Thyroid gland (tissue), 4 donors: ENCODE measurements at regions of chr15 and their contacts with region 1.

Region 1: DNA sequence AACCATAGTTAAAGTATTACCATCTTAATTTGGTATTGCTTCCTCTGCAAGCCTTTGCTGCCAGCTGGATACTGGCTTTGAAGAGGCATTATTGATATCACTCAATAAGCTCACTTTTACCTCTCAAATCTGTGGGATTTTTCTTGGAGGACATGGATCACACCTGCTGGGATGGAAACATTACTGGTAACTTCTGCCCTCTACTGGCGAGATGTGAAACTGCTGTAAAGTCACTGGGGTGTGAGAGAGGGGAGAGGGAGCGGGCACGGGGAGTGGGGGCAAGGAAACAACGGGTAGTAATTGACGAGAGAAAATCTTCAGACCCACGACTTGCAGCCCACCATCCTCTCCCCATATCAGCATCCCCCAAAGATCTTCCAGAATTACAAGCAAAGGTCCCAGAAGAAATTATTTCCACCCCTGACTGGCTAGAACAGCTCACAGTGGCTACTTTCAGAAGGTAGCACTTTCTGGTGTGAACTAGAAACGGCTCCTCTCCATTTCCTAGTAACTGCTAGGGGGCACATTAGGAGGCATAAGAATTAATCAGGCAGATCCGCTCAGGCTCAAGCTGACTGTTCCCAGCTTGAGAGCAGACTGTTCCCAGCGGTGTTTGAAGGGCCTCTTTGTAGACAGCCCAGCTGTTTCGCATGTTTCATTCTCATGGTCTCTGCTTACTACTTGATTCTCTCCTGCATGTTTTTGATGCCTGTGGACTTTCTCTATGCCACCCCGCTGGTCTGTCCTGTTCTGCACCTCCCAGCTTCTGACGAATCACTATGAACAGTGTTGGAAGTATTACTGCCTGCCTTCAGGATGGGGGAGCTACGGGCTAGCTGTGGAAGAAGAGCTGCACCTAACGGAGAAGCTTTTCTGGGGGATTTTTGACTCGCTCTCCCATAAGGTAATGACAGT is 230.4 kb upstream of the CHRM5 start:
- DNase-seq: peak; percentile 21 to 22
- H3K4me3 ChIP-seq: no peak overlapping the region
- H3K27ac ChIP-seq: no peak overlapping the region
- H3K4me1 ChIP-seq: no peaks in the 10 kb centered on the region
- H3K27me3 ChIP-seq: no peaks in the 10 kb centered on the region
- CTCF ChIP-seq: peak; percentile 33 to 83 (median 62)
- POLR2A ChIP-seq: no peak

Region 2: DNA sequence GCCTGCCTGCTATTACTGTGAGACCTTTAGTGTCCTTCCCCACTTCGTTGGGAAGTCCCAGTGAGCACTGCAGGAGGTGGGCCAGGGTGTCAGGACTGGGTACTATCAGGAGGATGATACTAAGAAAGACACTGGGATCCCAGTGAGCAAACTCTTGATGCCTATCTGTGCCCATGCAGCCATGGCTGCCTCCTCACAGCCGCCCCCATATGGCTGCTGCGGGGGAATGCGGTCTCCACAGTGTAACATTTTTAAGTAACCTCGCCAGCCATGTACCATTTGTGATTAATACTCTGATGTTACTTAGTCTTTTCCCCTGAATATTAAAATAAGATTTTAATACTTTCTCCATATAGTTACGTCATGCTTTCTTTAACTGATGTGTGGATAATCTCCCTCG is 114.9 kb before region 1 on chr15:
- intact Hi-C with region 1: no loop called
- DNase-seq: no peak
- H3K4me3 ChIP-seq: no peak overlapping the region
- H3K27ac ChIP-seq: no peak overlapping the region
- H3K4me1 ChIP-seq: no peaks in the 10 kb centered on the region
- H3K27me3 ChIP-seq: no peaks in the 10 kb centered on the region
- CTCF ChIP-seq: no peak
- POLR2A ChIP-seq: no peak

Region 3: GRCh38 chr15:33801954-33802353 is 64.0 kb after region 1 on chr15:
- intact Hi-C with region 1: no loop called
- DNase-seq: no peak
- H3K4me3 ChIP-seq: no peak overlapping the region
- H3K27ac ChIP-seq: peak overlapping the region in 1 of 3 donors; percentile 26
- H3K4me1 ChIP-seq: no peaks in the 10 kb centered on the region
- H3K27me3 ChIP-seq: no peaks in the 10 kb centered on the region
- CTCF ChIP-seq: no peak
- POLR2A ChIP-seq: no peak

Region 4: GRCh38 chr15:33963831-33964664 is 226.1 kb after region 1 on chr15:
- intact Hi-C with region 1: loop called (anchors 10 kb)
- DNase-seq: no peak
- H3K4me3 ChIP-seq: no peak overlapping the region
- H3K27ac ChIP-seq: no peak overlapping the region
- H3K4me1 ChIP-seq: no peaks in the 10 kb centered on the region
- H3K27me3 ChIP-seq: no peaks in the 10 kb centered on the region
- CTCF ChIP-seq: peak in 5 of 6 experiments; percentile 10 to 71 (median 60)
- POLR2A ChIP-seq: no peak